ENCODE measurements at regions of chr3 and their contacts with region 1.

Region 1: GRCh38 chr3:20324714-20325478 is 138.9 kb upstream of the SGO1 start:
- DNase-seq: no peak
- H3K4me3 ChIP-seq: no peak overlapping the region
- H3K4me3 Mint-ChIP-seq: no peak overlapping the region
- H3K27ac Mint-ChIP-seq: peak overlapping the region; percentile 71
- H3K4me1 ChIP-seq: peaks cover 67% of the 10 kb centered on the region
- H3K4me1 Mint-ChIP-seq: peaks cover 26% of the 10 kb centered on the region
- H3K27me3 ChIP-seq: no peaks in the 10 kb centered on the region
- H3K27me3 Mint-ChIP-seq: no peaks in the 10 kb centered on the region
- CTCF ChIP-seq: no peak

Region 2: GRCh38 chr3:20185701-20186598 is 138.9 kb before region 1 on chr3 and contains the start of gene SGO1:
- CTCF ChIA-PET with region 1: no interaction called
- POLR2A ChIA-PET with region 1: interaction called, 3 read pairs
- intact Hi-C with region 1: loop called (anchors 5 kb)
- DNase-seq: peak; percentile 98
- H3K4me3 ChIP-seq: peak within 1 kb of the TSS; percentile 92
- H3K4me3 Mint-ChIP-seq: no peak within 1 kb of the TSS
- H3K27ac Mint-ChIP-seq: no peak within 1 kb of the TSS
- H3K4me1 ChIP-seq: peaks cover 5% of the 10 kb centered on the region; the same call in 1 of the 2 replicates
- H3K4me1 Mint-ChIP-seq: no peaks in the 10 kb centered on the region
- H3K27me3 ChIP-seq: no peaks in the 10 kb centered on the region
- H3K27me3 Mint-ChIP-seq: no peaks in the 10 kb centered on the region
- CTCF ChIP-seq: no peak
- total RNA-seq, gene SGO1: 24.2 and 27.2 TPM in 2 replicates

Region 3: DNA sequence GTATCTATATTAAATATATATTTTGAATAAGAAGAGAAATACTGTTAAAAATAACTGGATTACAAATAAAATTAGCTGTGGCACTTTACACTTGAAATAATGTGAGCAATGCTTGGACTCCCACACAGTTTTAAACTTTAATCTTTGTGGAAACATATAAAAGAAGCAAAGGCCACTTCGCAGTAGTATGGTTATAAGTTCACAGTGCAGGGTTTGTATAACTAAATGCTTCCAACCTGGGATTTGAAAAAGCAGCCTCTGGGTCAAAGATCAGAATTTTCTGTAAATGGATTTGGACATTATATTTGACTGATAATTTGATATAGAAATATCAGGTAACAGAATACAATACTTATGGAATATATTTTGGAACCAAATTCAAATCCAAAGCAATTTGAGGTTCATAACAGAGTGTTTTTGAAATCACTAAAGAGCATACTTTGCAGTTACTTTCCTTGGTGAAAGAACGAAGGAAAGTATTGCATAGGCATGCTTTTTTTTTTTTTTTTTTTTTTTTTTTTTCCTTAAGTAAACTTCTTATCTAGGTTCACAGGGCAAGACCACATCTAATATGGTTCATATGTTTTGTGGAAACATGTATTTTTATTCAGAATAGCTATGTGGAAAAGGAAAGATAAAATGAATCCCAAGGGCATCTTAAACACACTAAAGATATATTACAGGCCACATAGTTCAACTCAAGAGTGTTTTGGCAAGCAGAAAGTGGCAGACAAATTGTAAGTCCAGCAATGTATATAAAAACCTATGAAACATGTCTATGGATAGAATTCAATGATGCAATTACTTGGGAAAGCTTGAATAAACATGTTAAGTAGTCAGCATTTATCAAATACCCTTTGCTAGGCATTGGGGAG is 91.8 kb before region 1 on chr3:
- CTCF ChIA-PET with region 1: no interaction called
- POLR2A ChIA-PET with region 1: no interaction called
- intact Hi-C with region 1: loop called (anchors 1 kb)
- DNase-seq: no peak
- H3K4me3 ChIP-seq: no peak overlapping the region
- H3K4me3 Mint-ChIP-seq: no peak overlapping the region
- H3K27ac Mint-ChIP-seq: no peak overlapping the region
- H3K4me1 ChIP-seq: no peaks in the 10 kb centered on the region
- H3K4me1 Mint-ChIP-seq: no peaks in the 10 kb centered on the region
- H3K27me3 ChIP-seq: no peaks in the 10 kb centered on the region
- H3K27me3 Mint-ChIP-seq: no peaks in the 10 kb centered on the region
- CTCF ChIP-seq: no peak

Region 4: GRCh38 chr3:20288050-20288449 is 36.8 kb before region 1 on chr3:
- CTCF ChIA-PET with region 1: no interaction called
- POLR2A ChIA-PET with region 1: no interaction called
- intact Hi-C with region 1: loop called (anchors 2 kb)
- DNase-seq: no peak
- H3K4me3 ChIP-seq: no peak overlapping the region
- H3K4me3 Mint-ChIP-seq: no peak overlapping the region
- H3K27ac Mint-ChIP-seq: no peak overlapping the region
- H3K4me1 ChIP-seq: no peaks in the 10 kb centered on the region
- H3K4me1 Mint-ChIP-seq: no peaks in the 10 kb centered on the region
- H3K27me3 ChIP-seq: no peaks in the 10 kb centered on the region
- H3K27me3 Mint-ChIP-seq: no peaks in the 10 kb centered on the region
- CTCF ChIP-seq: no peak

Measured in Caco-2 (cell line).